ENCODE measurements at regions of chrX and their contacts with region 1.

Region 1: GRCh38 chrX:70096052-70096451 is 33.8 kb downstream of the OTUD6A start:
- DNase-seq: no peak
- H3K4me3 ChIP-seq: no peak overlapping the region
- H3K27ac ChIP-seq: no peak overlapping the region
- H3K4me1 ChIP-seq: no peaks in the 10 kb centered on the region
- H3K27me3 ChIP-seq: no peaks in the 10 kb centered on the region
- CTCF ChIP-seq: peak; percentile 19 to 45 (median 34); a peak in 3 of 4 replicates
- EP300 ChIP-seq: no peak
- POLR2A ChIP-seq: no peak
- RAD21 ChIP-seq: peak; percentile 57 to 69

Region 2: GRCh38 chrX:69493193-69493592 is 602.9 kb before region 1 on chrX:
- CTCF ChIA-PET with region 1: interaction called, 23 read pairs
- POLR2A ChIA-PET with region 1: interaction called, 3 read pairs
- DNase-seq: peak in 1 of 2 experiments; percentile 72
- H3K4me3 ChIP-seq: no peak overlapping the region
- H3K27ac ChIP-seq: no peak overlapping the region
- H3K4me1 ChIP-seq: no peaks in the 10 kb centered on the region
- H3K27me3 ChIP-seq: no peaks in the 10 kb centered on the region
- CTCF ChIP-seq: peak in 2 of 3 experiments; percentile 51 to 54; a peak in 3 of 4 replicates
- EP300 ChIP-seq: no peak
- POLR2A ChIP-seq: no peak
- RAD21 ChIP-seq: peak; percentile 71 to 81

Region 3: GRCh38 chrX:69538321-69538876 is 557.7 kb before region 1 on chrX:
- CTCF ChIA-PET with region 1: interaction called, 18 read pairs
- POLR2A ChIA-PET with region 1: interaction called, 3 read pairs
- DNase-seq: peak; percentile 27 to 85
- H3K4me3 ChIP-seq: peak overlapping the region; percentile 20 to 64 (median 41); a peak in 7 of 8 replicates
- H3K27ac ChIP-seq: no peak overlapping the region
- H3K4me1 ChIP-seq: peaks cover 0 to 2% (median 0%) of the 10 kb centered on the region in 4 experiments; a peak in 2 of 7 replicates
- H3K27me3 ChIP-seq: no peaks in the 10 kb centered on the region; a peak in 1 of 7 replicates
- CTCF ChIP-seq: peak; percentile 66 to 88 (median 79)
- EP300 ChIP-seq: no peak
- POLR2A ChIP-seq: no peak
- RAD21 ChIP-seq: peak; percentile 91 to 95

Region 4: GRCh38 chrX:70042399-70043371 is 53.4 kb before region 1 on chrX:
- CTCF ChIA-PET with region 1: interaction called, 62 read pairs
- POLR2A ChIA-PET with region 1: no interaction called
- DNase-seq: no peak
- H3K4me3 ChIP-seq: no peak overlapping the region
- H3K27ac ChIP-seq: no peak overlapping the region
- H3K4me1 ChIP-seq: no peaks in the 10 kb centered on the region
- H3K27me3 ChIP-seq: no peaks in the 10 kb centered on the region
- CTCF ChIP-seq: no peak
- EP300 ChIP-seq: no peak
- POLR2A ChIP-seq: no peak
- RAD21 ChIP-seq: no peak

Region 5: GRCh38 chrX:70079297-70079696 is 16.8 kb before region 1 on chrX:
- CTCF ChIA-PET with region 1: interaction called, 15 read pairs
- POLR2A ChIA-PET with region 1: no interaction called
- DNase-seq: no peak
- H3K4me3 ChIP-seq: no peak overlapping the region
- H3K27ac ChIP-seq: no peak overlapping the region
- H3K4me1 ChIP-seq: no peaks in the 10 kb centered on the region
- H3K27me3 ChIP-seq: no peaks in the 10 kb centered on the region
- CTCF ChIP-seq: no peak
- EP300 ChIP-seq: no peak
- POLR2A ChIP-seq: no peak
- RAD21 ChIP-seq: no peak